Right cardiac atrium (tissue), 5 donors: ENCODE measurements at regions of chr2 and their contacts with region 1.

Region 1: DNA sequence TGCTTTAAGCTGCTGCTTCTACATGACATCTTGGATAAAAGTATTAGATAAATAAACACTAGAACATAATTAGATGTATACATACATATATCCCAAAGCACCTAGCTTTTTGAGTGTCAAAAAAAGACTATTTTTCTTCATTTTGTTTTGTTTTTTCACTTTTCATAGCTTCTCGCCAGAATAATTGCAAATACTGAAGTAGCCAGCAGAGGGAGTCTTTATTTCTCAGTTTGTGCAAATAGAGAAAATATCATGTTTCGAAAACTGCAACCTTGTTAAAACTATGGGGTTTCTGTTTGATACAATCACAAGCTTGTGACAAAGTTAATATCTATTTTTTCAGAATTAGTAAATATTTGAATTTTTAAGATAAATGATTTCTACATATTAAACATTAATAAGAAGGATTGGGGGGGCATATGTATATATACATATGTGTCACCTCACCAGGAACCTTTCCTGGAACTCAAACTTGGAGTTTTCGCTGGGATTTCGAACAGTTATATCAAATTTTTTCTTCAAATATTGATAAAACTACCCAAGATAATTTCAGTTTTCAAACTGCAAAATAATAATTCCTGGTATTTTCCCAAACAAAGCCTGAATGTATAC is 61.0 kb downstream of the GRB14 start:
- DNase-seq: no peak
- ATAC-seq: no peak
- H3K4me3 ChIP-seq: peak overlapping the region; percentile 45
- H3K27ac ChIP-seq: no peak overlapping the region
- H3K4me1 ChIP-seq: no peaks in the 10 kb centered on the region
- H3K27me3 ChIP-seq: no peaks in the 10 kb centered on the region

Region 2: DNA sequence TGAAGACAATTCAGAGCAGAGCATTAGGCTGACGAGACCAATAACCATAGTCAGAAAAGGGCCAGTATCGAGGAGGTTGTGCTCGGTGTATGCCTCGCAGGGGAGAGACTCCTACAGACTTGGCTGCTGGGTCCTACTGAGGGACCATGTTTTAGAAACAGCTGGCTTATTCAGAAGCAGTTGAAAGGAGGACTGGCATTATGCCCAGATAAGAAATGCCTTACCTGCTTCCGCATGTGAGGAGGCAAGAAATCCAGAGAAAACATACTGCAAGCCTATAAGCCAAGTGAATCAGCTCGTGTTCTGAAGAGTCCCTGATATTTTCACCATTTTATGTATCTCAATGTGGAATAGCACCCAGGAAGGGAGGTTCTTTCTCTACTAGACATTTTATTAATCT is 373.7 kb before region 1 on chr2:
- intact Hi-C with region 1: no loop called
- DNase-seq: no peak
- ATAC-seq: no peak
- H3K4me3 ChIP-seq: no peak overlapping the region
- H3K27ac ChIP-seq: no peak overlapping the region
- H3K4me1 ChIP-seq: no peaks in the 10 kb centered on the region
- H3K27me3 ChIP-seq: no peaks in the 10 kb centered on the region

Region 3: DNA sequence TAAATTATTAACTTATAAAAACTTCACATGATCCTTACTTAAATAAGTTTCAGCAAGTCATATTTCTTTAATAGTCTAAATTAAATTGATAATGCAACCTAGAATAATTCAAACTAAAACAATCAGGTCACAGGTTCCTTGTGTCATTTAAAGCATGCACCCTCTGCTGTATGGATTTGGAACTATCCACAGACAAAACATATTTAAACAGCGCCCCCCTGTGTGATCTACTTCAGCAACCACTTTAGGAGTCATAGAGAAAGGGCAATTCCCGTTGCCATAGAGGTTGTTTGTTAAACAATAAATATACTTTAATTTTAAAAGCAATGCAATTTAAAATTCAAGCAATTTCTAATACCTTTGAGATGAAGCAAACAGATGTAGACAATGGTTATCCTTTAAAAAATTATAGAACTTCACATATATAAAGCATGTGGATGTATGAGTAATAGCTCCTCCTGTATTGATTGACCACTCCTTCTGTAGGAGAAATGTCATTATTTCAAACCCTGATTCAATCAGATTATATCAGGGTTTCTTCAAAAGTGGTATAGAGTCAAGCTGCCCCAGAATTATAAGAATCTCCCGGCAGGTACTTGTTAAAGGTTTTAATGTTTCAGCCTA is 39.8 kb after region 1 on chr2:
- intact Hi-C with region 1: loop called in 1 of 4 experiments (anchors 5 kb)
- DNase-seq: peak in 1 of 3 donors; percentile 32
- ATAC-seq: peak; percentile 55 to 77
- H3K4me3 ChIP-seq: no peak overlapping the region
- H3K27ac ChIP-seq: no peak overlapping the region
- H3K4me1 ChIP-seq: peaks cover 1% of the 10 kb centered on the region
- H3K27me3 ChIP-seq: no peaks in the 10 kb centered on the region

Region 4: DNA sequence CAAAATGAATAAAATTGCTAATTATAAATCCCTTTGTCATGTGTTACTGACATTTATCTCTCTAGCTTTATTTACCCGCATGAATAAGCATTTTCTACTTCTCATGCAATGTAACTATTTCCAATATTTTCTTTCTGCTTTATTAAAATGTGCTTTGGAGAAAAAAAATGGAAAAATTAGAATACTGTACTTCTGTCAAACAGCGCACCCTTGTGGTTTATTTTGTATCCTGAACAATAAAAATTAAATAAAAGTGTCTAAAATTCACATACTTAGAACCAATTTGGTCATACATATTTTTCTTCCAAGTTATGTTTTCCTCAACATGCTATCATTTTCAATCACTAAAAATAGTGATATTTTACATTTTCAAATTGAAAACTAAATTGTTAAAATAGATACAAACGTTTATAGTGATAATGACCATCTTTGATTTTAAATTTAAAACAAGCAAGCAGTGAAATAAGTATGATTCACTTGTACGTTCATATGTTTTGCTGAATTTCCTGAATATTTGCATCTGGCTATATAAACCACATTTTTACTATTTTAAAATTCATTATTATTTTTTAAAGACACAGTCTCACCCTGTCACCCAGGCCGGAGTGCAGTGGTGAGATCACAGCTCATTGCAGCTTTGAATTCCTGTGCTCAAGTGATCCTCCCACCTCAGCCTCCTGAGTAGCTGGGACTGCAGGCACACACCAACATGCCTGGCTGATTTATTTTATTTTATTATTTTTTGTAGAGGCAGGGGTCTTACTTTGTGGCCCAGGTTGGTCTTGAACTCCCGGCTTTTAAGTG is 156.9 kb after region 1 on chr2:
- intact Hi-C with region 1: loop called in 3 of 4 experiments (anchors 5 to 10 kb)
- DNase-seq: no peak
- ATAC-seq: no peak
- H3K4me3 ChIP-seq: no peak overlapping the region
- H3K27ac ChIP-seq: no peak overlapping the region
- H3K4me1 ChIP-seq: no peaks in the 10 kb centered on the region
- H3K27me3 ChIP-seq: no peaks in the 10 kb centered on the region